ENCODE measurements at regions of chr4 and their contacts with region 1.

Region 1: GRCh38 chr4:102620697-102621497 is 119.7 kb downstream of the NFKB1 start:
- DNase-seq: peak; percentile 71
- H3K4me3 ChIP-seq: peak overlapping the region; percentile 8 to 31 (median 18)
- H3K27ac ChIP-seq: peak overlapping the region; percentile 50
- H3K4me1 ChIP-seq: peaks cover 19% of the 10 kb centered on the region
- H3K27me3 ChIP-seq: no peaks in the 10 kb centered on the region
- CTCF ChIP-seq: peak; percentile 31 to 63

Region 2: DNA sequence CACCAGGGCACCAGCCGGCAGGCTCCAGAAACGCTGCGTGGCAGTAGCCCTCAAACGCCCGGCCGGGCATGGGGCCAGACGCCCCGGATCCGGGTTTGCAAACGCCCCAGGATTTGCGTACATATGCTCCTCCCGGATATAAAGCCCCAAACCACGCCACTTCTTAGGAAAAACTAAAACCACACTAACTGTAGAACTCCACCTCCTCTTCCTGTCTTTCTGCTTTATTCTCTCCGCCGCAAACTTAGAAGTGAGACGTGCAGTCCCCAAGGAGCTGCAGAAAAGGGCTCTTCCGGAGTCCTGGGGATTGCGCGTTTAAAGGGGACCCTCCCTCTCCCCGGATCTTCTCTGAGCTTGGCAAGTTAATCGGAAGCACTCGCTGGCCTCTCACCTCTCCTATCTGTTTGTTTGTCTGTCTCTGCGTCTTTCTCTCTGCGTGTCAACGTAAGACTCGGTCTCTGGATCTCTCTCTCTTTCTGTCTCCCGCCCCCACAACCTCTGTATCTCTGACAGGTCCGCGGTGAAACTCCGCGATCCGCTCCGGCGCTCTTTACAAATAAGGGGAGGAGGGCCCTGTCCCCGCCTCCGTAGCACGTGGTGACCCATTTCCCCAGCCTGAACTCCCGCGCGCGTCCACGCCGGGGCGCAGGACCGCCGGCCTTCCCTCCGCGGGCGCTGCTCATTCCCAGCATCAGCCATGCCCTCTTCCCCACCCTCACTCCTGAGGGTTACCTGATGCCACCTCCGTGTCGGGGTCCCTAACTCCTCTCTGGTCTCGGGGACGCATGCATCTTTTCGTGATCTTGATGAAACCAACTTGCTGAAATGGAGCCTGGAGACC is 275.7 kb before region 1 on chr4 and contains the start of gene SLC39A8:
- CTCF ChIA-PET with region 1: interaction called, 3 read pairs
- dilution Hi-C with region 1: no loop called
- in situ Hi-C with region 1: no loop called
- intact Hi-C with region 1: loop called (anchors 5 kb)
- DNase-seq: peak; percentile 80
- H3K4me3 ChIP-seq: peak within 1 kb of the TSS; percentile 76 to 91 (median 76)
- H3K27ac ChIP-seq: peak within 1 kb of the TSS; percentile 76
- H3K4me1 ChIP-seq: peaks cover 26% of the 10 kb centered on the region
- H3K27me3 ChIP-seq: no peaks in the 10 kb centered on the region
- CTCF ChIP-seq: peak; percentile 40 to 86
- total RNA-seq, gene SLC39A8: 8.9 to 12.5 TPM

Region 3: GRCh38 chr4:102500696-102501446 is 120.0 kb before region 1 on chr4 and contains the start of gene NFKB1:
- CTCF ChIA-PET with region 1: no interaction called
- dilution Hi-C with region 1: no loop called
- in situ Hi-C with region 1: no loop called
- intact Hi-C with region 1: loop called (anchors 5 kb)
- DNase-seq: peak; percentile 93
- H3K4me3 ChIP-seq: peak within 1 kb of the TSS; percentile 69 to 86 (median 81)
- H3K27ac ChIP-seq: peak within 1 kb of the TSS; percentile 91
- H3K4me1 ChIP-seq: peaks cover 19% of the 10 kb centered on the region
- H3K27me3 ChIP-seq: no peaks in the 10 kb centered on the region
- CTCF ChIP-seq: no peak
- total RNA-seq, gene NFKB1: 23.5 to 52.9 TPM

Region 4: DNA sequence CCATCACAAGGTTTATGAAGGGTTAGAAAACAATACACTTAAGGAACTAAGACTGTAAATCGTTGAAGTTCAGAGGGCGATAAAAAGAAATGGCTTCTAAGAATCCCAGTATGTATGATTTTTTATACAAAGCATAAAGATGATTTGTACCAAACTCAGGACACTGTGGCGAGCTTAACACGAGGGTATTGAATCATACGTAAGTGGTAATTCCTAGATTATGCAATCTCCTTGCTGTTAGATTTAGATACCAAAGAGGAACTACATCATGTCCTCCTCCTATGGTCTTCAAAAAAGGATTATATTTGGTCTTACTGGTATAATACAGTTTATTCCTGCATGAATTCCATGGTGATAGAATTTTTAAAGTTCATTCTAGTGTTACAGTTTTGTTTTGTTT is 95.8 kb before region 1 on chr4:
- CTCF ChIA-PET with region 1: no interaction called
- dilution Hi-C with region 1: no loop called
- in situ Hi-C with region 1: no loop called
- intact Hi-C with region 1: no loop called
- DNase-seq: peak; percentile 58
- H3K4me3 ChIP-seq: no peak overlapping the region
- H3K27ac ChIP-seq: no peak overlapping the region
- H3K4me1 ChIP-seq: peaks cover 6% of the 10 kb centered on the region
- H3K27me3 ChIP-seq: no peaks in the 10 kb centered on the region
- CTCF ChIP-seq: no peak

Region 5: DNA sequence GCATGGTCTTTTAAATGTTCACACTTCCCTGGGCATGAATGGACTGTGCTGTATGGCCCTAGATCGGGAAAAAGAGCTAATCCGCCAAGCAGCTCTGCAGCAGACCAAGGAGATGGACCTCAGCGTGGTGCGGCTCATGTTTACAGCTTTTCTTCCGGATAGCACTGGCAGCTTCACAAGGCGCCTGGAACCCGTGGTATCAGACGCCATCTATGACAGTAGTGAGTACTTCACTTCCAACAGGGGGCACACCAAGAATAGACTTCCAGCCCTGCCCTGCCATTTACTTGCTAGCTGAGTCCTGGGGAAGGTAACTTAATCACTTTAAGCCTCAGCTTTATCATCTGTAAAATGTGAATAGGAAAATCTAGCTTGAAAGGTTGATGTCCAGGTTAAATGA is 42.1 kb before region 1 on chr4:
- CTCF ChIA-PET with region 1: no interaction called
- dilution Hi-C with region 1: no loop called
- in situ Hi-C with region 1: no loop called
- intact Hi-C with region 1: no loop called
- DNase-seq: no peak
- H3K4me3 ChIP-seq: no peak overlapping the region
- H3K27ac ChIP-seq: no peak overlapping the region
- H3K4me1 ChIP-seq: peaks cover 6% of the 10 kb centered on the region
- H3K27me3 ChIP-seq: no peaks in the 10 kb centered on the region
- CTCF ChIP-seq: no peak

Region 6: GRCh38 chr4:102760645-102761295 is 139.9 kb after region 1 on chr4 and contains the start of gene MANBA:
- CTCF ChIA-PET with region 1: no interaction called
- dilution Hi-C with region 1: no loop called
- in situ Hi-C with region 1: no loop called
- intact Hi-C with region 1: loop called (anchors 1 kb)
- DNase-seq: peak; percentile 84
- H3K4me3 ChIP-seq: peak within 1 kb of the TSS; percentile 56 to 84 (median 83)
- H3K27ac ChIP-seq: peak within 1 kb of the TSS; percentile 58
- H3K4me1 ChIP-seq: peaks cover 17% of the 10 kb centered on the region
- H3K27me3 ChIP-seq: no peaks in the 10 kb centered on the region
- CTCF ChIP-seq: peak in 1 of 2 donors; percentile 3
- total RNA-seq, gene MANBA: 21.6 to 44.0 TPM

Region 7: GRCh38 chr4:102826890-102827673 is 206.2 kb after region 1 on chr4 and contains the start of gene UBE2D3:
- CTCF ChIA-PET with region 1: no interaction called
- dilution Hi-C with region 1: no loop called
- in situ Hi-C with region 1: no loop called
- intact Hi-C with region 1: loop called (anchors 2 kb)
- DNase-seq: peak; percentile 94
- H3K4me3 ChIP-seq: peak within 1 kb of the TSS; percentile 92 to 93 (median 93)
- H3K27ac ChIP-seq: peak within 1 kb of the TSS; percentile 99
- H3K4me1 ChIP-seq: peaks cover 15% of the 10 kb centered on the region
- H3K27me3 ChIP-seq: no peaks in the 10 kb centered on the region
- CTCF ChIP-seq: peak in 1 of 2 donors; percentile 20
- total RNA-seq, gene UBE2D3: 338 to 352 TPM

Region 8: GRCh38 chr4:103019308-103020124 is 398.6 kb after region 1 on chr4 and contains the start of gene SLC9B1:
- CTCF ChIA-PET with region 1: no interaction called
- dilution Hi-C with region 1: loop called (anchors 25 kb)
- in situ Hi-C with region 1: no loop called
- intact Hi-C with region 1: no loop called
- DNase-seq: peak; percentile 98
- H3K4me3 ChIP-seq: peak within 1 kb of the TSS; percentile 54 to 60 (median 57)
- H3K27ac ChIP-seq: peak within 1 kb of the TSS; percentile 94
- H3K4me1 ChIP-seq: peaks cover 15% of the 10 kb centered on the region
- H3K27me3 ChIP-seq: no peaks in the 10 kb centered on the region
- CTCF ChIP-seq: no peak
- total RNA-seq, gene SLC9B1: 0.17 TPM in 1 of 2 donors, not detected in the other

Region 9: GRCh38 chr4:103934178-103934789 is 1313.4 kb after region 1 on chr4:
- CTCF ChIA-PET with region 1: no interaction called
- dilution Hi-C with region 1: no loop called
- in situ Hi-C with region 1: no loop called
- intact Hi-C with region 1: loop called (anchors 10 kb)
- DNase-seq: peak; percentile 25
- H3K4me3 ChIP-seq: no peak overlapping the region
- H3K27ac ChIP-seq: no peak overlapping the region
- H3K4me1 ChIP-seq: no peaks in the 10 kb centered on the region
- H3K27me3 ChIP-seq: no peaks in the 10 kb centered on the region
- CTCF ChIP-seq: peak; percentile 65 to 78

Measured in mammary epithelial cell (primary cell).